AG04449 (cell line): ENCODE measurements at regions of chr1 and their contacts with region 1.

Region 1: GRCh38 chr1:223845810-223846682 is at the start of gene TP53BP2:
- DNase-seq: no peak
- H3K4me3 ChIP-seq: peak within 1 kb of the TSS; percentile 72
- CTCF ChIP-seq: peak; percentile 82

Region 2: DNA sequence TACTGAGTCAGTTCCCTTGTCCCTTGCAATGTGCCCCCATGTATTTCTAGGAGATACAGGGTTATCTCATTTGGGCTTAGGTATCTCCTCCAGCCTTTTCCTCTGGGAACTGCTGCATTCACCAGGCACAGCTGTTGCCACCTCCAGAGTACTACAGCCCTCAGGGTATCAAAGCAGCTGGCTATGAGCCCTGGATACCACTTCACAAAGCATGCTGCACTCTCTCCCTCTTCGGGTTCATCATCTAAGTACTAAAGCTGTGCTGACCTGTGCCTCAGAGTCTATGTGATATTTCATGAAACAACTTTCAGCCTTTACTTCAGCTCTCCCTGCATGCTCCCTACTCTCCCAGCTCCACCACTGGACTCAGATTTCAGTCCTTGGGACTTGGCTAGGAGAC is 390.6 kb before region 1 on chr1:
- CTCF ChIA-PET with region 1: no interaction called
- POLR2A ChIA-PET with region 1: no interaction called
- DNase-seq: no peak
- H3K4me3 ChIP-seq: no peak overlapping the region
- CTCF ChIP-seq: no peak

Region 3: DNA sequence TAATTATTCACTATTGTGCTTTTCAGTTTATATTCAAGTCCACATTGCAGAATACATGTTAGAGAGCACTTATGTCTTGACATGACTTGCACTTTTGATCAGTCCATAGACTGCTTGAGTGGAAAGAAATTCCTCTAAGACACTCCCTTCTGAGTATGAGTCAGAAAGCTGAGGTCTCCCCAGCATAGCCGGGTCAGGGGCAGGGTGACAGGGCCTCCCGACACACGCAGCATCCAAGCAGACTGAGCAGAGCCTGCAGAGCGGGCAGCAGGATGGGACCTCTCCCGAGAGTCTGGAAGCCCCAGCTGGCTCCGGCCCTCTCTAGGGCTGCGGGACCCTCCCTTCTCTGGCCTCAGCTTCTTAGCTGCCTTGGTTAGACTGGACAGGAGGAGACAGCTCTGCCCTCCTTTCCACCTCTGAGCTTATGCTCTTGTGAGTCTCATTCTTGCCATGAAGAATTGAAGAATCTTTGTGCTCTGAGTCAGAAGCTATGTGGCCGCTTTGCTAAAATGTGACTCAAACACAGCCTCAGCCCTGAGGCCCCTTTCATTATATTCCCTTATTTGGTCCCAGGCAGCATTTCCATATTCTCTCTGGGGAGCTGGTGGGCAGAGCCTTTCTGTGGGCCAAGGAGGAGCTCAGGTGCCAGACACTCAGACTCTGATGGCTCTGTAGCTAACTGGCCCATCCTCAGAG is 145.0 kb before region 1 on chr1:
- CTCF ChIA-PET with region 1: interaction called, 3 read pairs
- POLR2A ChIA-PET with region 1: interaction called, 10 read pairs
- DNase-seq: peak; percentile 97
- H3K4me3 ChIP-seq: peak overlapping the region; percentile 52
- CTCF ChIP-seq: no peak

Region 4: DNA sequence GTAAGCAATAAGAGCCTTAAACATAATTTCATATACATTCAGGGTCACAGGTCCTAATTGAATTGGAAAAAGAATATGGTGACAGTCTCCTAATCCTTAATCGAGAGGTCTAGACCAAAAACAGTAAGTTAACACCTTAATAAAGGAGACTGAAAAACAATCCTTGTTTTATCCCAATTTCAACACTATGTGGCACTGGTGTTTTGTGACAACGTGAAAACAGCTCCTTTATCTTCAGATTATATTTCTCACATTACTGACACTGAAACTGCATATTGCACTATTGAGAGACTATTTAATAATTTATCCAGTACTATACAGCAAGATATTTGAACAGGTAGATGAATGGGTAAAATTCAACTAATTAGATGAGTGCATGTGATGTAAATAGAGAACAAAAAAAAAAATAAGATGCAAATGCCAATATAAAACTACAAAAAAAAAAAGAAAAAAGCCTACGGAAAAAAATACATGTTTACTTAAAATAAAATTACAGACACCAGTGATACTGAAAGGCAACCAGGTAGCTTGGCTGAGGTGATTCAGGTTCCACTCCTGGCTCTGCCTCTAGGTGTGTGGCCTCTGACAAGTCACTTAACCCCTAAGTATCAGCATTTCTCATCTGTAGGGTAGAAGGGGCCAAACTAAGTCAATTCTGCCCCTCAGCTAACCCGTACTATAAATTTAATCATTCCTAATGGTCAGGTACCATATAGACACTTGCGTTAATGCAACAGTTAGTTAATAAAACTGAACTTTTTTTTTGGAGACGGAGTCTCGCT is 34.2 kb before region 1 on chr1:
- CTCF ChIA-PET with region 1: interaction called, 13 read pairs
- POLR2A ChIA-PET with region 1: no interaction called
- DNase-seq: no peak
- H3K4me3 ChIP-seq: no peak overlapping the region
- CTCF ChIP-seq: peak; percentile 41

Region 5: DNA sequence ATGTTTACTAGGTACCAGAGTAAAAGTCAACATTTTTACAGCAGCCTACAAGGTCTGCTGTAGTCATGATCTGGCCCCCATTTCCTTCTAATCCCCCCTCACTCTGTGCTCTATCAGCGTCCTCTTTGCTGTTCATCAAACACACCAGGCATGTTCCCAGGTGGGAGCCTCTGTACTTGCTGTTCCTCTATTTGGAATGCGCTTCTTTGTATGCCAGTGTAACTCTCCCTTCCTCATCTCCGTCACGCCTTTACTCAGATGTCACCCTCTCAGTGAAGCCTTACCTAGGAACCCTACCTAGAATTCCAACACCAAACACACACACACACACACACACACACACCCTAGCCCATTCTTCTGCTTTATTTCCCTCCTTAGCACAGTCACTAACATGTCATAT is 21.3 kb before region 1 on chr1:
- CTCF ChIA-PET with region 1: interaction called, 10 read pairs
- POLR2A ChIA-PET with region 1: interaction called, 7 read pairs
- DNase-seq: no peak
- H3K4me3 ChIP-seq: no peak overlapping the region
- CTCF ChIP-seq: no peak

Region 6: GRCh38 chr1:223860051-223860622 is 14.1 kb after region 1 on chr1:
- CTCF ChIA-PET with region 1: interaction called, 10 read pairs
- POLR2A ChIA-PET with region 1: no interaction called
- DNase-seq: no peak
- H3K4me3 ChIP-seq: no peak overlapping the region
- CTCF ChIP-seq: no peak

Region 7: GRCh38 chr1:223887747-223888418 is 41.8 kb after region 1 on chr1:
- CTCF ChIA-PET with region 1: interaction called, 11 read pairs
- POLR2A ChIA-PET with region 1: interaction called, 5 read pairs
- DNase-seq: peak; percentile 93
- H3K4me3 ChIP-seq: peak overlapping the region; percentile 41
- CTCF ChIP-seq: no peak